GM10248 (cell line): ENCODE measurements at regions of chr2 and their contacts with region 1.

Region 1: DNA sequence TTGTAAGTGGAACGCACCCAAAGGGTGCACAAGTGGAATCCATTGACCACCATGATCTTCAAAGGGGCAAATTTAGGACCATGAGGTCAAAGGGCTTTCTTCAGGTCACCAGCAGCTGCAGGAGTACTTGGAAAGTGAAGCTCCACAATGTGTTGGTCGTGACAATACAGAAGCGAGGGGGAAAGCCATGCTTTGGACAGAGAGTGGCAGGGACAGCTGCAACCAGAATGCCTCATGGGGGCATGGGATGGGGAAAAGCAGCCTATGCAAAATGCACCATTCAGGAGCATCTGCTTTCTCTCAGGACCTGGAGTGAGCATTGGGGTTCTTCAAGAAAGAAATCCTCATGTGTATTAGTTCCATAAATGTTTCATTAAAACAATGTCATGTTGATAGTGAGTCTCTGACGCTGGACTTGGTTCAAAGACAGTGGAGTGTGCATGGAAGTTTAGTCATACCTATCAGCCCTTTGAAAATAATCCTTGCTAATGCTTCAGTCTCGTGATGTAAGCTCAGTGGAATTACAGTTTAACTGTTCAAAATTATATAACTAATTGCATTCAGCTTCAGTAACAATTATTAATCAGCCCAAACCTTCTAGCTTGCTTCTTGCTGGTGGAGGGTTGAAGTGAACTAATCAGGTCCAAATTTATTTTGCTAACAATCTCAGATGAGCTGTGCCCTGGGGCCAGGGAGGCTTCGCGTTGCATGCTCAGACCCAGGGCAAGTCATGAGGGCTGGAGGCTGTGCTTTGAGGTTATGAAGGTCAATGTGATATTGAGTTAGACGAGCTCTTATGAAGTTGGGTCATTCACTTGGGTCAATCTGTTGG is 41.6 kb downstream of the ACKR3 start:
- DNase-seq: no peak
- CTCF ChIP-seq: no peak

Region 2: GRCh38 chr2:236523249-236523648 is 88.0 kb before region 1 on chr2:
- CTCF ChIA-PET with region 1: no interaction called
- POLR2A ChIA-PET with region 1: no interaction called
- DNase-seq: no peak
- CTCF ChIP-seq: no peak

Region 3: DNA sequence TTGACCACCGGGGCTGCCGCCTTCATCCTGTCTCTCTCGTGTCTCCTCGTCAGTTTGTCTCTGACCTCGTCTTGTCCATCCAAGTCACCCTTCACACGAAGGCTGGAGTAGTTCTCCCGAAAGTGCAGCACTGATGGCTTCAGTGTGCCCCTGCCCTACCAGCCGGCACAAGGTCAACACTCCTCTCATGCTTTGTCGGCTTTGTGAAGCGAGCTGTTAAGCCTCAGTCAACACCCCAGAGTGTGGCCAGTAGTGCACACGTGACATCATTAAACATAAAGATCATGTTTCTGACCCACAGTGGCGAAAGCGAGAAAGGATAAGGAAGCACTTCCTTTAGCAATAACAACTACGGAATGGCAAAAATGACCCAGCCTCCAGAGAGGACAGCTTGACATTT is 18.4 kb before region 1 on chr2:
- CTCF ChIA-PET with region 1: no interaction called
- POLR2A ChIA-PET with region 1: no interaction called
- DNase-seq: no peak
- CTCF ChIP-seq: no peak

Region 4: GRCh38 chr2:236623816-236624215 is 12.6 kb after region 1 on chr2:
- CTCF ChIA-PET with region 1: interaction called, 10 read pairs
- POLR2A ChIA-PET with region 1: no interaction called
- DNase-seq: no peak
- CTCF ChIP-seq: no peak